ENCODE measurements at regions of chr16 and their contacts with region 1.

Region 1: GRCh38 chr16:66552286-66553177 is at the start of gene CKLF:
- DNase-seq: peak; percentile 86
- H3K4me3 ChIP-seq: peak within 1 kb of the TSS in 2 of 3 donors; percentile 51 to 53
- H3K27ac ChIP-seq: peak within 1 kb of the TSS; percentile 92 to 97 (median 94)
- H3K4me1 ChIP-seq: peaks cover 35% of the 10 kb centered on the region in 2 donors
- H3K27me3 ChIP-seq: no peaks in the 10 kb centered on the region
- CTCF ChIP-seq: no peak
- POLR2A ChIP-seq: peak in 1 of 2 donors; percentile 83
- total RNA-seq, gene CKLF: 22.1 to 79.4 (median 49.9) TPM

Region 2: GRCh38 chr16:66516808-66517585 is 35.5 kb before region 1 on chr16:
- intact Hi-C with region 1: loop called (anchors 5 kb)
- DNase-seq: peak; percentile 99
- H3K4me3 ChIP-seq: no peak overlapping the region
- H3K27ac ChIP-seq: peak overlapping the region; percentile 90 to 96 (median 95)
- H3K4me1 ChIP-seq: peaks cover 61 to 85% of the 10 kb centered on the region in 2 donors
- H3K27me3 ChIP-seq: no peaks in the 10 kb centered on the region
- CTCF ChIP-seq: no peak
- POLR2A ChIP-seq: peak in 1 of 2 donors; percentile 53

Region 3: DNA sequence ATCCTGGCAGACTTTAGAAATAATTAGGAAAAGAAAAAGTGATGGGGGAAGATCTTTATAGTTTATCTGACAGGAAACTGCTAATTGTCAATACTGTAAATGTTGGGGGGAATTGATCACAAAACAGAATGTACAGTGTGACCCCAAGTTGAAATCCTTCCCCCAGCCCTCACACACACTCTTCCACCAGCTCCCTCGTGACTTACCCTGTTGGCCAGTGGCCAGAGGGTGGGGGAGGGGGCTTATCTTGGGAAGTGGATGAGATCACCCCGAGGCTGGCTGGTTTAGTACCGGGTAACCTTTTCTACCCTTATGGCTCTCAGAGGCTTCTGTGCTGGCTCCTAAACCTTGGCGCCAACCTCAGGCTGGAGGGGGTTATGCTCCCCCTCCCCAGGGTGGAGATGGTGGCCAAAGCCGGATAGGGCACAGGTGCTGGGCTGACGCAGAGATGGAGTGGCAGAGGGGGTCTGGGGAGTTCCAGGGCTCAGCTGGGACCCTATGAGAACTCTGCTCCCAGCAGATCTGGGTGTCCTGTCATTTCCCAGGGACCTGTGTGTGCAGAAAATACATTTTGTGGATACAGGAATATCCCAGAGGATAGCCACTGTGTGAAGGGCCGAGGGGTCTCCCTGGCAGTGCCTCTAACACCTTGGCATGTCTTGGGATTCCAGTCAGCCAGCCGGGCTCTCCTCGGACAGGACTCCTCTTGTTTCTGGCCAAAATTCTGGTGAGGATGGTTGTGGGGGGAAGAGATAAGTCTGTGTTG is 347.6 kb after region 1 on chr16:
- intact Hi-C with region 1: no loop called
- DNase-seq: peak; percentile 93 to 96
- H3K4me3 ChIP-seq: no peak overlapping the region
- H3K27ac ChIP-seq: peak overlapping the region; percentile 89 to 98 (median 96)
- H3K4me1 ChIP-seq: peaks cover 68 to 96% of the 10 kb centered on the region in 2 donors
- H3K27me3 ChIP-seq: no peaks in the 10 kb centered on the region
- CTCF ChIP-seq: no peak
- POLR2A ChIP-seq: peak; percentile 8 to 51